Heart right ventricle (tissue), 16 donors: ENCODE measurements at regions of chr7 and their contacts with region 1.

Region 1: GRCh38 chr7:37987732-37988131 is 67.3 kb downstream of the EPDR1 start:
- DNase-seq: no peak
- ATAC-seq: peak in 3 of 8 donors; percentile 46 to 62 (median 61)
- H3K4me3 ChIP-seq: no peak overlapping the region
- H3K27ac ChIP-seq: peak overlapping the region in 3 of 10 donors; percentile 11 to 30 (median 19)
- H3K4me1 ChIP-seq: peaks cover 0 to 6% (median 0%) of the 10 kb centered on the region in 9 donors
- H3K27me3 ChIP-seq: no peaks in the 10 kb centered on the region
- CTCF ChIP-seq: no peak

Region 2: DNA sequence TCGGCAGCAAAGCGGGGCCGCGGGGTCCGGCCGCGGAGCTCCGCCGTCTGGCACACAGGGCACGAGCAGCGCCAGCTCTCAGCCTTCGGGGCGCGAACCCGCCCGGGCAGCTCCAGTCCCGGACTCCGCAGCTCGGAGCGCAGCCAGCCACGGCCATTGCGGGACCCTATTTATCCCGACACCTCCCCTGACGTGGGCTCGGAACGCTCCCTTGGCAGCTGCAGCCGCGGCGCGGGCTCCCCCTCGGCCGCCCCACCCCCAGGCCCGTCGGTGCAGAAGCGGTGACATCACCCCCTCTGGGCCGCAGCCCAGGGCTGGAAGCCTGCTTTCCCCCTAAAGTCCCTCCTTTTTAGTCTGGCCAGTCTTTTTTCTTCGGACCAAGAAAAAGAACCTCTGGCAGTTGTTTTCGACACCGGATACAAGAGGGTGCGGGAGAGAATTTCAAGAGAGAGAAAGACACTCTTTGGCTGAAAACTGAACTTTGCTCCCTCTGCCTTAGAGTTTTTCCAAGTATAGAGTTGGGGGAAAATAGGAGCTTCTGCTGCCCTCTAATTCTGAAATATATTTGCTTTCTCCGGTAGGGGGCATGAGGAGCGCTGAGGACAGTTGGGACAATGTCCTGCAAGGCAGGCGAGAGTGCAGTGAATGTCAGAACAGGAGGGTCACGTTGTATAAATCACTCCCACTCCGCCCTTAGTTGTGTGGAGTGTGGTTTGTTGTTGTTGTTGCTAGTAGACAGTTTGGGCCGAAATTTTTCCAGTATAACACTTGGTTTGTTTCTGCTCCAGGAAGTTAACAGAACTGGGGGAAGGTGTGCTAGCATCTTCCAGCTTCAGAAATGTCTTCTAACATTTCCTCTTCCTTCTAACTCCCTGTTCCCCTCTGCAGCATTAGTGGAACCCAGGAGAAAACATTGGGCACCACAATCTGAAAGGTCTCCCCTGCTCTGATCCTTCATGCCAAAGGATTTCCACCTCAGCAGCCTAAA is 70.8 kb before region 1 on chr7 and contains the start of gene SFRP4:
- intact Hi-C with region 1: loop called in 1 of 10 experiments (anchors 10 kb)
- DNase-seq: peak; percentile 61 to 67
- ATAC-seq: peak; percentile 57 to 83 (median 62)
- H3K4me3 ChIP-seq: peak within 1 kb of the TSS; percentile 31 to 62 (median 55)
- H3K27ac ChIP-seq: peak within 1 kb of the TSS; percentile 12 to 82 (median 69)
- H3K4me1 ChIP-seq: peaks cover 4 to 50% (median 32%) of the 10 kb centered on the region in 9 donors
- H3K27me3 ChIP-seq: peaks cover 0 to 69% (median 17%) of the 10 kb centered on the region in 7 donors
- CTCF ChIP-seq: peak; percentile 35 to 73 (median 68)
- total RNA-seq, gene SFRP4: 0.23 to 9.9 (median 3.4) TPM